Activated B cell treated with CpG ODN at 0.5 μM for 24 hours (primary cell): ENCODE measurements at regions of chr3 and their contacts with region 1.

Region 1: GRCh38 chr3:3126477-3127431 is at the start of gene TRNT1:
- DNase-seq: peak; percentile 94
- ATAC-seq: peak; percentile 96
- H3K4me3 Mint-ChIP-seq: peak within 1 kb of the TSS; percentile 96
- H3K27ac Mint-ChIP-seq: peak within 1 kb of the TSS; percentile 93
- H3K4me1 Mint-ChIP-seq: peaks cover 28% of the 10 kb centered on the region
- H3K27me3 Mint-ChIP-seq: no peaks in the 10 kb centered on the region
- CTCF ChIP-seq: no peak
- total RNA-seq, gene TRNT1: 40.1 and 51.3 TPM in 2 replicates

Region 2: GRCh38 chr3:2921903-2922302 is 204.9 kb before region 1 on chr3:
- CTCF ChIA-PET with region 1: no interaction called
- POLR2A ChIA-PET with region 1: no interaction called
- intact Hi-C with region 1: loop called (anchors 10 kb)
- DNase-seq: no peak
- ATAC-seq: peak; percentile 40
- H3K4me3 Mint-ChIP-seq: no peak overlapping the region
- H3K27ac Mint-ChIP-seq: no peak overlapping the region
- H3K4me1 Mint-ChIP-seq: peaks cover 2% of the 10 kb centered on the region
- H3K27me3 Mint-ChIP-seq: no peaks in the 10 kb centered on the region
- CTCF ChIP-seq: no peak

Region 3: DNA sequence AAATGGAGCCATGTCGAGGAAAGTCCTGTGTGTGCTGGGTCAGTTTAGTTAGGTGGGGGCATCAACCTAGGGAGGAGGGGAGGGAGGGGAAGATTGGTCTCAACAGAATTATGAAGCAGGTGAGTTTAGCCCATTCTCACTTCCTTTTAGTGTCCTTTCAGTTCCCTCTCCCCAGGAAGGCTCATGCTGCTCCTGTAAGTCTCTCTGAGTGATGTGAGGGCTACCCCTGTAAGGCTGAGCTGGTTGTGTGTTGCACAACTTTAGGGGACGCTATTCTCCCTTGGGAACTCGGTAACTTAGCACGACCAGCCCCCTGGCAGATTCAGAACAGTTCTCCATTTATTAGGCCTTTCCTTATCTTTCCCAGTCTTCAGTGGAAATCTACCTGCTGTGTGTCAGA is 37.7 kb before region 1 on chr3:
- CTCF ChIA-PET with region 1: no interaction called
- POLR2A ChIA-PET with region 1: no interaction called
- intact Hi-C with region 1: loop called (anchors 1 kb)
- DNase-seq: no peak
- ATAC-seq: peak; percentile 98
- H3K4me3 Mint-ChIP-seq: no peak overlapping the region
- H3K27ac Mint-ChIP-seq: peak overlapping the region; percentile 63
- H3K4me1 Mint-ChIP-seq: peaks cover 20% of the 10 kb centered on the region
- H3K27me3 Mint-ChIP-seq: peaks cover 1% of the 10 kb centered on the region
- CTCF ChIP-seq: no peak

Region 4: GRCh38 chr3:3141939-3142338 is 15.2 kb after region 1 on chr3:
- CTCF ChIA-PET with region 1: no interaction called
- POLR2A ChIA-PET with region 1: no interaction called
- intact Hi-C with region 1: loop called (anchors 2 kb)
- DNase-seq: no peak
- ATAC-seq: no peak
- H3K4me3 Mint-ChIP-seq: no peak overlapping the region
- H3K27ac Mint-ChIP-seq: no peak overlapping the region
- H3K4me1 Mint-ChIP-seq: no peaks in the 10 kb centered on the region
- H3K27me3 Mint-ChIP-seq: no peaks in the 10 kb centered on the region
- CTCF ChIP-seq: no peak

Region 5: DNA sequence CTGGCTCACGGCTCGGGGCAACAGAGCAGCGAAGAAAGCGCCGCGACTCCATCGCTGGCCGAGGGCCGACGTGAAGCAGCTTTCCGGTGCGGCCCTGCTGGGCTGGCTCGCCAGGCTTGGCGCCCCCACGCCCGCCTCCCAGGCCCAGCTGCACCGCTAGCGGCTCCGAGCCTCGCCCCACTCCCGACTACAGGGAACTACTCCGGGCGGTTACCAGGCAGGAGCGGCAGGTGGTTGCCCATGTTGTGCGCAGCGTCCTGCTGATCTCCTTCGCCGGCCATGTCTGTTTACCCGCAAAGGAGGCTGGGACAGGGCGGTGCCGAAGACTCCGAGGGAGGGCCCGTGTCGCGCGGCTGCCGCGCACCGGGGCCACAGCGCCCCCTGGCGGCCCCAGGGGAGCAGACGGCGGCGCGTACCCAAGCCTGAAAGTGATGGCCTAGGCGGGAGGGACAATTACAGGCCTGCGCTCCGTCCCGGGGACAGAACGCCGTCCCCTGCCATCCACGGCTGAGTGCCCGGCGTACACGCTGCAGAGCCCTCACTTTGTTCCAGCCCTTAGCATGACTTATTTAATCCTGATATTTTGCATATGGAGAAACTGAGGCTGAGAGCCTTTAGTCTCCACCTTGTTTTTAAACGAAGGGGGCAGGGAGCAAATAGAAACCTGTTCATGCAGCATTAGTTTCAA is 52.8 kb after region 1 on chr3 and contains the start of gene CRBN:
- CTCF ChIA-PET with region 1: no interaction called
- POLR2A ChIA-PET with region 1: interaction called, 3 read pairs
- intact Hi-C with region 1: loop called (anchors 1 kb)
- DNase-seq: peak; percentile 90
- ATAC-seq: peak; percentile 99
- H3K4me3 Mint-ChIP-seq: peak within 1 kb of the TSS; percentile 91
- H3K27ac Mint-ChIP-seq: peak within 1 kb of the TSS; percentile 72
- H3K4me1 Mint-ChIP-seq: peaks cover 40% of the 10 kb centered on the region
- H3K27me3 Mint-ChIP-seq: no peaks in the 10 kb centered on the region
- CTCF ChIP-seq: peak; percentile 51
- total RNA-seq, gene CRBN: 47.8 and 58.2 TPM in 2 replicates

Region 6: GRCh38 chr3:3209714-3210113 is 83.0 kb after region 1 on chr3:
- CTCF ChIA-PET with region 1: no interaction called
- POLR2A ChIA-PET with region 1: no interaction called
- intact Hi-C with region 1: no loop called
- DNase-seq: no peak
- ATAC-seq: no peak
- H3K4me3 Mint-ChIP-seq: no peak overlapping the region
- H3K27ac Mint-ChIP-seq: no peak overlapping the region
- H3K4me1 Mint-ChIP-seq: no peaks in the 10 kb centered on the region
- H3K27me3 Mint-ChIP-seq: peaks cover 8% of the 10 kb centered on the region
- CTCF ChIP-seq: no peak

Region 7: GRCh38 chr3:4303187-4304123 is 1176.7 kb after region 1 on chr3 and contains the start of gene SETMAR:
- CTCF ChIA-PET with region 1: no interaction called
- POLR2A ChIA-PET with region 1: no interaction called
- intact Hi-C with region 1: loop called (anchors 1 kb)
- DNase-seq: peak; percentile 77
- ATAC-seq: peak; percentile 96
- H3K4me3 Mint-ChIP-seq: peak within 1 kb of the TSS; percentile 98
- H3K27ac Mint-ChIP-seq: peak within 1 kb of the TSS; percentile 98
- H3K4me1 Mint-ChIP-seq: peaks cover 11% of the 10 kb centered on the region
- H3K27me3 Mint-ChIP-seq: no peaks in the 10 kb centered on the region
- CTCF ChIP-seq: no peak
- total RNA-seq, gene SETMAR: 10.3 and 11.4 TPM in 2 replicates